Activated CD4-positive, alpha-beta T cell treated with anti-CD3 and anti-CD28 coated beads, Interleukin-2, amount 10 ng/mL, durations not matched to agents 7 days and 5 days (primary cell): ENCODE measurements at regions of chr19 and their contacts with region 1.

Region 1: DNA sequence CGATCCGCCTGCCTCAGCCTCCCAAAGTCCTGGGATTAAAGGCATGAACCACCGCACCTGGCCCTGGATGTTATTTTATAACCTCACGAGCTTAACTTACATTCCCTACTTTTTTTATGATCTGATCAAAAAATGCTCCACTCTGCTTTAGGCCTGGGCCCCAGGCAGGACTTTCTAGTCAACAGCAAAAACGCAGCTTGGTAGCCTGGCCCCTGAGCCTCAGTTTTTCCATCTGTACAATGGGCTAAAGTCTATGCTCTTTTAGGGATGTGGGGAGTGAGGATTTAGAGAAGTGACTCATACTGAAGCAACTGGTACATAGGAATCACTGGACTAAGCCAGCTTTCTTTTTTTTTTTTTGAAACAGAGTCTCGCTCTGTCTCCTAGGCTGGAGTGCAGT is 11.9 kb upstream of the PIK3R2 start:
- DNase-seq: no peak
- H3K4me3 Mint-ChIP-seq: no peak overlapping the region
- H3K27ac Mint-ChIP-seq: no peak overlapping the region
- H3K4me1 Mint-ChIP-seq: no peaks in the 10 kb centered on the region
- H3K27me3 Mint-ChIP-seq: no peaks in the 10 kb centered on the region

Region 2: DNA sequence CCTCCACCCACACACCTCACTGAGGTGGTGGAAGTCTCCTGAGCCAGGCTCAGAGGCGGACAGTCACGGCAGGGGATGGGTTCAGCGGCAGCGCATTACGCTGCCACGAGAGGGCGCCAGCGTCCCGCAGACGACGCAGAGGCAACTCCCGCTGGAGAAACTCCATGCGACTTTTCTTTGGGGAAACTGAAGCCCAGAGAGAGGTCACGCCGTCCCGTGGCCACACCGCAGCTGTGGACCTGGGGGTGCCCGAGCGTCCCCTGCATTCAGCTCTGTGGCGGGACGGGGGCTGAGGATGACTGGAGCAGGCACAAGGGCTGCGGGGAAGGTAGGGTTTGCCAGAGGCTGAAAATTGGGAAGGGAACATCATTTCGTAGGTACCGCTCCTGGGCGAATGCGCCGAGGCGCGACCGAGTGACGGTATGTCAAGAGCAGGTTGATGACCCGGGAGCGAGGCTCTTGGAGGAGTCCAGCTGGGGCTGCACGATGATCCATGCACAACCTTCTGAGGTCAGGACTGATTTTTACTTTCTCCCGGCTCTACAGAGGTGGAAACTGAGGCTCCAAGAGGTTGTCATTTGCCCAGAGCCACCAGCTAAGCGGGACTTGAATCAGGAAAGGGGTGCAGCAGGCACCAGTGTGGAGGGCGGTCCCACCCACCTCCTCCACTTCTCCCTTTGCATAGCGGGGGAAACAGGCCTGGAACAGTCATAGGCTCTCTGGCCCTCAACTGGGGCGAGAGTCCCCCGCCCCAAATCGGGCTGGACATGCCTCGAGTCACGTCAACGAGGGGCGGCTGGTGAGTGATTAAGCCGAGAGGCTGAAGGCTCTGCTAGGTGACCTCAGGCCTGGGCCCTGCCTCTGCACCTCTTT is 133.8 kb before region 1 on chr19:
- CTCF ChIA-PET with region 1: no interaction called
- POLR2A ChIA-PET with region 1: no interaction called
- DNase-seq: peak; percentile 79
- H3K4me3 Mint-ChIP-seq: peak overlapping the region; percentile 74
- H3K27ac Mint-ChIP-seq: peak overlapping the region; percentile 84
- H3K4me1 Mint-ChIP-seq: peaks cover 46% of the 10 kb centered on the region
- H3K27me3 Mint-ChIP-seq: no peaks in the 10 kb centered on the region

Region 3: GRCh38 chr19:18152444-18152816 is 11.4 kb after region 1 on chr19:
- CTCF ChIA-PET with region 1: interaction called, 18 read pairs
- POLR2A ChIA-PET with region 1: interaction called, 3 read pairs
- DNase-seq: peak; percentile 99
- H3K4me3 Mint-ChIP-seq: peak overlapping the region; percentile 82
- H3K27ac Mint-ChIP-seq: peak overlapping the region; percentile 99
- H3K4me1 Mint-ChIP-seq: peaks cover 27% of the 10 kb centered on the region
- H3K27me3 Mint-ChIP-seq: no peaks in the 10 kb centered on the region